ENCODE measurements at regions of chr6 and their contacts with region 1.

Region 1: DNA sequence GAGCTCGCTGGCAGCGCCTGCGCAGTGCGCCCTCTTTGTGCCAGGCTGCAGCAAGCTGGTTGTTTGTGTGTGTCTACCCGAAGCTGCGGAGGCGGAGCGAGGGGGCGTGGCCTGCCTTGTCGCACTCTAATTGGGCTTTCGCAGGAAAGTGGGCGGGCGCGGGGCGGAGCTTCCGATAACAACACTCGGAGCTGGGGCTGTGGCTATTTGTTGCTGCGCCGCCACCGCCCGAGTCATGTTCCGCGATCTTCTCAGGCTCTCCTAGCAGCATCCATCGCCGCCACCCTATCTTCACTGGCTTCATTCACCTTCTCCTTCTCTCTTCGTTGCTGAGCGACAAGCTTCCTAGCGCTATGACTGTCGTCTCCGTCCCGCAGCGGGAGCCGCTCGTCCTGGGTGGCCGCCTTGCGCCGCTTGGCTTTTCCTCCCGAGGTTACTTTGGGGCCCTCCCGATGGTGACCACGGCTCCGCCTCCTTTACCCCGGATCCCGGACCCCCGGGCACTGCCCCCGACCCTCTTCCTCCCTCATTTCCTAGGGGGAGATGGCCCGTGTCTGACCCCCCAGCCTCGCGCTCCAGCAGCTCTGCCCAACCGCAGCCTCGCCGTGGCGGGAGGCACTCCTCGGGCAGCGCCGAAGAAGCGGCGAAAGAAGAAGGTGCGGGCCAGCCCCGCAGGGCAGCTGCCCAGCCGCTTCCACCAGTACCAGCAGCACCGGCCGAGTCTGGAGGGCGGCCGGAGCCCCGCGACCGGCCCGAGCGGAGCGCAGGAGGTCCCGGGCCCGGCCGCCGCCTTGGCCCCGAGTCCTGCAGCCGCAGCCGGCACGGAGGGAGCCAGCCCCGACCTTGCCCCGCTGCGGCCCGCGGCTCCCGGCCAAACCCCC is at the start of gene PNRC1:
- DNase-seq: peak; percentile 99 to 100 (median 100)
- ATAC-seq: peak; percentile 86
- H3K4me3 ChIP-seq: peak within 1 kb of the TSS; percentile 96
- H3K4me3 Mint-ChIP-seq: peak within 1 kb of the TSS; percentile 91 to 99 (median 98)
- H3K27ac ChIP-seq: peak within 1 kb of the TSS; percentile 100
- H3K27ac Mint-ChIP-seq: peak within 1 kb of the TSS; percentile 92 to 99 (median 98)
- H3K4me1 ChIP-seq: peaks cover 27 to 33% of the 10 kb centered on the region in 2 donors
- H3K4me1 Mint-ChIP-seq: peaks cover 31 to 54% (median 42%) of the 10 kb centered on the region in 7 donors
- H3K27me3 ChIP-seq: no peaks in the 10 kb centered on the region
- H3K27me3 Mint-ChIP-seq: peaks cover 0 to 4% (median 0%) of the 10 kb centered on the region in 5 donors
- total RNA-seq, gene PNRC1: 108 to 822 (median 763) TPM

Region 2: DNA sequence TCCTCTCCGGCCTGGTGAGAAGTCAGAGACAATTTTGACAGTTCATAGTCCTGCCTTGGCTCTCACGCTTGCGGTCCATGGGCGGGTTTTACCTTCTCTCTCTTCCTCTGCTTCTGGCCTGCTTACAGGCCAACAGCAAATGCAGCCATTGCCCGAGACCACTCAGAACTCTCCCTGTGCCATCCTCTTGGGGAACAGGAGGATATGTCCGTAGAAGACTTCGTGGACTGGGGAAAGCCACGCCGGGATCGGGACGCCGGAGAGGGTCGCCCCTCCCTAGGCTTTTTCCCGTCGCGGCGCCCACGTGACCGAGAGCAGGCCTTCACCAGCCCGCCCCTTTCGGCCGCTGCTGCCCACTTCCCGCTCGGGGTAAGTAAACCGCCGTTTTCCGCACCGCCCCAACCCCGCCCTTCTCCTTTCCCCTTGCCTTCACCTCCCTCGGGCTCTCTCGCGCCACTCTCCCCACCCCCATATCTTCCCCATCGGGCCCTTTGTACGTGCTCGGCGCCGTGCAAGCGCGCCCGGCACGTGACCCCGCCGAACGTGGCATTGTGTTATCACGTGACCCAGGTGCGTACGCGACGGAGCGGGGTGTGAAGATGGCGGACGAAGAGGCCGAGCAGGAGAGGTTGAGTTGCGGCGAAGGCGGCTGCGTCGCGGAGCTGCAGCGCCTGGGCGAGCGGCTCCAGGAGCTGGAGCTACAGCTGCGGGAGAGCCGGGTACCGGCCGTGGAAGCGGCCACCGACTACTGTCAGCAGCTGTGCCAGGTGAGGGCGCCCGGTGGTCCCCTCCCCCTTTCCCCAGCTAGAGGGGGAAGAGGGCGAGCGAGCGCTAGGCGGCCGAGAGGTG is 1925.6 kb before region 1 on chr6 and contains the start of gene ZNF292:
- CTCF ChIA-PET with region 1: no interaction called
- POLR2A ChIA-PET with region 1: interaction called, 3 read pairs
- intact Hi-C with region 1: loop called (anchors 1 to 2 kb)
- DNase-seq: peak; percentile 82 to 97 (median 94)
- ATAC-seq: peak; percentile 85
- H3K4me3 ChIP-seq: peak within 1 kb of the TSS; percentile 93
- H3K4me3 Mint-ChIP-seq: peak within 1 kb of the TSS; percentile 81 to 99 (median 94)
- H3K27ac ChIP-seq: peak within 1 kb of the TSS; percentile 83
- H3K27ac Mint-ChIP-seq: peak within 1 kb of the TSS; percentile 88 to 99 (median 94)
- H3K4me1 ChIP-seq: peaks cover 40 to 45% of the 10 kb centered on the region in 2 donors
- H3K4me1 Mint-ChIP-seq: peaks cover 34 to 69% (median 55%) of the 10 kb centered on the region in 7 donors
- H3K27me3 ChIP-seq: no peaks in the 10 kb centered on the region
- H3K27me3 Mint-ChIP-seq: peaks cover 0 to 2% (median 0%) of the 10 kb centered on the region in 5 donors
- total RNA-seq, gene ZNF292: 62.4 to 87.5 (median 74.3) TPM

Region 3: DNA sequence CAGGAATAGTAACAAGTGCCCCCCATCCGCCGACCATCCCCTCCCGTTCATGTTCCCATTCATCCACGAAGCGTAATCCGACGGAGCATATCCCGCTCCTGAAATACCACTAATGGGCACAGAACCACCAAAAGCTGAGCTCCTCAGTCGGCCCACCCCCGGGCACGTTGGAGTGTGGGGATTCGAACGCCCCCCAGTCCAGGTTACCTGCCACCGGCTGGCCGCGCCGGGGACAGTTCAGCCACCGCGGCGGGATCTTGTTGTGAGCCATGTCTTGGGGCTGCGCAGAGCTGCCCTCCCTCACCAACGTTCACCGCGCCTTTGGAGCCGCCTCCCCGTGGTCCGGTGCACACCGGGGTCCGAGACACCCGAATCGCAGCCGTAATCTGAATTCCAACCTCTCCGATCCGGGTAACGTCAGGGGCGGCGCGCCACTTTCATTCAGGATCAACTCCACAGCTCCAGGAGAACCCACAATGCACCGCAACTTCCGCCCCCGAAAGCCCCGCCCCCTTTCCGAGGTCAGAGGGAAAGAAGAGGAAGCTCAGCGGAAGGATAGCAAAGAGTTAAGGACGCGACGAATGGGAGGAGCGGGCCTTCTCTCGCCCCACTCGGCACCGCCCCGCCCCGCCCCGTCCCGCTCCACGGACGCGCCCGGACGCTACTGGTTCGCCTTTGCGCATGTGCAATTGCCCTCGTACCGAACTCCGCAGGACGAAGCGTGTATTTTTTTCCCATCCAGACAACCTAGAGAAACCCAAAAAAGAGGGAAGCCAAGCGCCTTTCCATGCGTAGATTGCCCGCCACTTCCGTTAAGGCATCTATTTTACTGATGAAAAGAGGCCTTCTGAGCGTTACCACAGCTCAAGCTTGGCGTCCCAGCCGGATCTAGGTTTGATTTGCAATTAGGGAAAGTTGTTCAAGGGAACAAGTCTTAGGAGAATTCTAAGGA is 117.4 kb before region 1 on chr6 and contains the start of gene RNGTT:
- CTCF ChIA-PET with region 1: no interaction called
- POLR2A ChIA-PET with region 1: interaction called, 58 read pairs
- intact Hi-C with region 1: loop called (anchors 1 kb)
- DNase-seq: peak; percentile 89 to 98 (median 95)
- ATAC-seq: peak; percentile 100
- H3K4me3 ChIP-seq: peak within 1 kb of the TSS; percentile 82
- H3K4me3 Mint-ChIP-seq: peak within 1 kb of the TSS; percentile 91 to 99 (median 98)
- H3K27ac ChIP-seq: peak within 1 kb of the TSS; percentile 82
- H3K27ac Mint-ChIP-seq: peak within 1 kb of the TSS; percentile 85 to 97 (median 94)
- H3K4me1 ChIP-seq: peaks cover 9 to 18% of the 10 kb centered on the region in 2 donors
- H3K4me1 Mint-ChIP-seq: peaks cover 25 to 57% (median 52%) of the 10 kb centered on the region in 7 donors
- H3K27me3 ChIP-seq: no peaks in the 10 kb centered on the region
- H3K27me3 Mint-ChIP-seq: peaks cover 0 to 2% (median 0%) of the 10 kb centered on the region in 5 donors
- total RNA-seq, gene RNGTT: 15.4 to 26.5 (median 20.8) TPM

Region 4: DNA sequence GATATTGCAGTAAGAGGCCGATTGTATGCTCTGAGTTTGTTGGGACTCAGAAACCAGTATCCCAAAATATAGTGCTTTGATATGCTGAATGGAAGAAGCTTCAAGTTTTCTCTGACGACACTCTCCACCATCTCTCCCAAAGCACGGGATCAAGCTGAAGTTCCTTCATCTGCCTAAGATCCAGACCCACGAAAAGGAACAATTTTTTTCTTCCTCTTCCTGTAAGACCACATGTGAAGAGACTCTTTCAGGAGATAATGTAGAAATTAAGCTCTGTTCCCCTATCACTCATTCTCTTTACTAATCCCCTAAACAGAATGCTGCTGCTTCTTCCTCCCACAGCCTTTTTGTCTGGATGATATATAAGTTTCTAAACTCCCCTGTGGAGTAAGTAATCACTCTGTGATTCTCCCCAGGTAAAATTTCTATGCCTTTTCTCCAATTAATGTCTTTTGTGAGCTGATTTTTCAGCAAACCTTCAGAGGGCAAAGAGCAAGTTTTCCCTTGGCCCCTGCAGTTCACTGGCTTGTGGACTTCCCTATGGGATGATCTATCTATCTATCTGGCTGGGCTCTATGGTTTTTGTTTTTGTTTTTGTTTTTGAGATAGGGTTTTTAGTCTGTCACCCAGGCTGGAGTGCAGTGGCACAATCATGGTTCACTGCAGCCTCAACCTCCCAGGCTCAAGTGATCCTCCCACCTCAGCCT is 13.7 kb before region 1 on chr6:
- CTCF ChIA-PET with region 1: interaction called, 6 read pairs
- POLR2A ChIA-PET with region 1: interaction called, 34 read pairs
- intact Hi-C with region 1: no loop called
- DNase-seq: no peak
- ATAC-seq: peak; percentile 27
- H3K4me3 ChIP-seq: no peak overlapping the region
- H3K4me3 Mint-ChIP-seq: no peak overlapping the region
- H3K27ac ChIP-seq: no peak overlapping the region
- H3K27ac Mint-ChIP-seq: no peak overlapping the region
- H3K4me1 ChIP-seq: no peaks in the 10 kb centered on the region
- H3K4me1 Mint-ChIP-seq: peaks cover 0 to 13% (median 0%) of the 10 kb centered on the region in 7 donors
- H3K27me3 ChIP-seq: no peaks in the 10 kb centered on the region
- H3K27me3 Mint-ChIP-seq: peaks cover 0 to 22% (median 4%) of the 10 kb centered on the region in 5 donors

Region 5: DNA sequence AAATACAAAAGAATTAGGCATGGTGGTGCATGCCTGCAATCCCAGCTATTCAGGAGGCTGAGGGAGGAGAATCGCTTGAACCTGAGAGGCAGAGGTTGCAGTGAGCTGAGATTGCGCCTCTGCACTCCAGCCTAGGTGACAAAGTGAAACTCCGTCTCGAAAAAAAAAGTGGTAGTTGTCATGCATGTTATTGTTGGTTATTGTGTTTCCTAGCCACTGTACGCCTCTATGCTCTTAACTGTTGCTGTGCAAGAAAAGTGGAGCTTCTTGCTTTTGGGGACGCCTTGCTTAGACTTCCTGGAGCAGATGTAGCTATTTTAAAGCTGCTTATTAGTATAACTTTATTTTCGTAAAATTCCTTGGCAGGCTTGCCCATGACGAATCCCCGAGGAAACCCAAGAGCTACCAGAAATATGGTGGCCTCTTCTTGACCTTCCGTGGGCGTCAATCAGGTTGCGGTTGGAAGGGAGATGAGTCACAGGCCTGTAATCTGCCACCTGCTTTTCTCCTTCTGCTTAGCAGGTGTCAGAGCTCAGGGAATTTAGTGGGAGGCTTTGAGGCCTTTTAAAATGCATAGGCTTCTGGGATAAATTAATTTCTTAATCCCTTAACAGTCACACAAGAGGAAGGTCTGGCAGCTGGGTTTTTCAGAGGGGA is 217.0 kb after region 1 on chr6:
- CTCF ChIA-PET with region 1: no interaction called
- POLR2A ChIA-PET with region 1: interaction called, 3 read pairs
- intact Hi-C with region 1: loop called (anchors 1 kb)
- DNase-seq: peak in 4 of 9 donors; percentile 19 to 72 (median 24)
- ATAC-seq: peak; percentile 78
- H3K4me3 ChIP-seq: no peak overlapping the region
- H3K4me3 Mint-ChIP-seq: peak overlapping the region in 9 of 10 donors; percentile 12 to 69 (median 34)
- H3K27ac ChIP-seq: no peak overlapping the region
- H3K27ac Mint-ChIP-seq: peak overlapping the region; percentile 15 to 95 (median 63)
- H3K4me1 ChIP-seq: peaks cover 16 to 17% of the 10 kb centered on the region in 2 donors
- H3K4me1 Mint-ChIP-seq: peaks cover 13 to 22% (median 18%) of the 10 kb centered on the region in 7 donors
- H3K27me3 ChIP-seq: no peaks in the 10 kb centered on the region
- H3K27me3 Mint-ChIP-seq: no peaks in the 10 kb centered on the region

Region 6: GRCh38 chr6:89638320-89639195 is 557.8 kb after region 1 on chr6 and contains the start of gene LYRM2:
- CTCF ChIA-PET with region 1: no interaction called
- POLR2A ChIA-PET with region 1: interaction called, 4 read pairs
- intact Hi-C with region 1: loop called (anchors 1 kb)
- DNase-seq: peak; percentile 85 to 93 (median 91)
- ATAC-seq: peak; percentile 97
- H3K4me3 ChIP-seq: peak within 1 kb of the TSS; percentile 99
- H3K4me3 Mint-ChIP-seq: peak within 1 kb of the TSS; percentile 90 to 98 (median 94)
- H3K27ac ChIP-seq: peak within 1 kb of the TSS; percentile 91
- H3K27ac Mint-ChIP-seq: peak within 1 kb of the TSS; percentile 96 to 99 (median 99)
- H3K4me1 ChIP-seq: peaks cover 9 to 15% of the 10 kb centered on the region in 2 donors
- H3K4me1 Mint-ChIP-seq: peaks cover 6 to 45% (median 27%) of the 10 kb centered on the region in 7 donors
- H3K27me3 ChIP-seq: no peaks in the 10 kb centered on the region
- H3K27me3 Mint-ChIP-seq: peaks cover 0 to 3% (median 0%) of the 10 kb centered on the region in 5 donors
- total RNA-seq, gene LYRM2: 18.1 to 40.7 (median 32.0) TPM

Region 7: GRCh38 chr6:89689732-89690131 is 609.0 kb after region 1 on chr6:
- CTCF ChIA-PET with region 1: no interaction called
- POLR2A ChIA-PET with region 1: no interaction called
- intact Hi-C with region 1: no loop called
- DNase-seq: no peak
- ATAC-seq: peak; percentile 41
- H3K4me3 ChIP-seq: no peak overlapping the region
- H3K4me3 Mint-ChIP-seq: no peak overlapping the region
- H3K27ac ChIP-seq: no peak overlapping the region
- H3K27ac Mint-ChIP-seq: peak overlapping the region in 2 of 9 donors; percentile 2 to 21
- H3K4me1 ChIP-seq: no peaks in the 10 kb centered on the region
- H3K4me1 Mint-ChIP-seq: peaks cover 0 to 18% (median 12%) of the 10 kb centered on the region in 7 donors
- H3K27me3 ChIP-seq: no peaks in the 10 kb centered on the region
- H3K27me3 Mint-ChIP-seq: no peaks in the 10 kb centered on the region

Measured in naive thymus-derived CD4-positive, alpha-beta T cell (primary cell).